ENCODE measurements at regions of chr2 and their contacts with region 1.

Region 1: DNA sequence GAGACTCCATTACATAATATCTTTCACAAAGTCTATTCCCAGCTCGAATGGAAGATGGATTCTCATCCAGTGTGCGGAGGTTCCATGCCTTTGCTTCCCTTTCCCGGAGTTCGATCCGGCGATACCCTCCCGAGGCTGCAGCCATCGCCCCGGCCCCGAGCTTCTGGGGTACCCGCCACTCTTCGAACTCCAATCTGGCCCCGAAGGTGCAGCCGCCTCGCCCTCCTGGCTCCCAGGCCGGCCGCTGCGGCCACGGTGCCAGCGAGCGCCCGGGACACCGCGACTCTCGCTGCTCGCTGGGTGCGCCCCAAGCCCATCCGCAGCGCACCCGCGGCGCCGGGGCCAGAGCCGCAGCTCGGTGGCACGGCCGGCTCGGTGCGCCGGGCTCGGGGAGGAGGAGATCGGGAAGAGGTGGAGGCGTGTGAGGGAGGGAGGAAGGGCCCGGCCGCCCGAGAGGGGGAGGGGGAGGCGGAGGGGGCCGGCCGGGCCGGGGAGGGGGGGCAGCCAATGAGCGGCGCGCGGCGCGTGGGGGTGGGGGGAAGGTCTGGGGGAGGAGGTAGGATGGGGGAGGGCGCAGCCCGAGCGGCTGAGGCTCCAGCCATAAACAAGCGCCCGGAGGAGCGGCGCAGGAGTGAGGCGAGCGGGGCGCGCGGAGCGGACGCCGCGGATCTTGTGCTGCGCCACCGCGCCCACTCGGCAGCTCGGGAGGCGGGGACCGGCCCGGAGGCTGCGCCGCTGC is at the start of gene CRIM1:
- DNase-seq: peak; percentile 95
- total RNA-seq, gene CRIM1: 103 to 143 TPM

Region 2: DNA sequence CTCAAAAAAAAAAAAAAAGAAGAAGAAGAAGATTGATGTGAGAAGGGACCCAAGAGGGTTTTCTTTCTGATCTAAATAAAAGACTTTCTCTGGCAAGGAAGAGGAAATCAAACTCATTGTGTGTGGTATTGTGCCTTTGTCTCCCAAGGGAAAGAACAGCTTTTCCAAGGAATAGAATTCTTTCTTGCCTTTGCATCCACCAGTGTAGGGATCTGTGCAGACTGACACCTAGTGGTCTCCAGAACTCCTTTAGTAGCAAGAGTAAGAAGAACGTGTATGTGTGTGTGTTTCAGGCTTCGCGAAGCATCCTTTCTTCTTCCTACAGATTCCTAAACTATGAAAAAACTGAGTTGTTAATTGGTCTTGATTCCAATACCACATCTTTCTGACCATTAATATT is 33.2 kb before region 1 on chr2:
- intact Hi-C with region 1: no loop called
- DNase-seq: no peak

Region 3: GRCh38 chr2:36459725-36460137 is 104.4 kb after region 1 on chr2:
- intact Hi-C with region 1: loop called in 1 of 2 experiments (anchors 10 kb)
- DNase-seq: no peak

Region 4: DNA sequence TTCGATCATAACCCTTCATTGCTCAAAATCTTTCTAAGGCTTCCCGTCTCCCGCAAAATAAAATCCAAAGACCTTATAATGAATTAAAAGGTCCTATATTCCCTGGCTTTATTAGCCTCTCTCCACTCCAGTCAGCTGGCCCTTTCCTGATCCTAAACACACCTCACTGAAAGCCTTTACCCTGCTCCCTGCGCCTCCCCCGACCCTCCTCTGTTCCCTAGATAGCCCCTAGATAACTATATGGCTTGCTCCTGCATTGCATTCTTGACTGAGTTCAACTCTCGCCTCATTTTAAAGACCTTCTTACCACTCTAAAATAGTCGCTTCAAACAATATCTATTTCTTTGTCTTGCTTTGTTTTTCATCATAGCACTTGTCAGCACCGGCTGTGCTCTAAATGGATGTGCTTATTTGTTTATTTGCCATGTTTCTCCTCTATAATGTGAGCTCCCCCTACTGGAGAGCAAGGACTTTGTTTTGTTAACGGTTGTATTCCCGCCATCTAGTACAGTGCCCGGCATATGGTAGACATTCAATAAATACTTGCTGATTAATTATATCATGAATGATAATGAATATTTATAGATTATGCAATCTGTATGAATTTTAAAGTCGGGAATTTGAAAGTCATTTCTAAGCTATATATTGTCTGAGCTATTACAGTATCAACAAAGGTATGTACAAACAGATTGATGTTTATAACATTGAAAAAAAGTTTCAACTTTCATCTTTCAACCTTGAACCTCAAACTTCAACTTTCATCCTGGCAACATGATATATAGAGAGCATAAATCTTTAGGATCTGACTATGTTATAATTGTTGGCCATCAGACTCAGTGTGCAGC is 308.8 kb after region 1 on chr2:
- intact Hi-C with region 1: loop called (anchors 5 kb)
- DNase-seq: no peak

Region 5: GRCh38 chr2:37925063-37925897 is 1570.0 kb after region 1 on chr2 and contains the start of gene RMDN2:
- intact Hi-C with region 1: no loop called
- DNase-seq: peak; percentile 98
- total RNA-seq, gene RMDN2: 6.4 to 6.6 TPM

Measured in posterior vena cava (tissue), 2 donors.